Gastrocnemius medialis (tissue), 4 donors: ENCODE measurements at regions of chr1 and their contacts with region 1.

Region 1: DNA sequence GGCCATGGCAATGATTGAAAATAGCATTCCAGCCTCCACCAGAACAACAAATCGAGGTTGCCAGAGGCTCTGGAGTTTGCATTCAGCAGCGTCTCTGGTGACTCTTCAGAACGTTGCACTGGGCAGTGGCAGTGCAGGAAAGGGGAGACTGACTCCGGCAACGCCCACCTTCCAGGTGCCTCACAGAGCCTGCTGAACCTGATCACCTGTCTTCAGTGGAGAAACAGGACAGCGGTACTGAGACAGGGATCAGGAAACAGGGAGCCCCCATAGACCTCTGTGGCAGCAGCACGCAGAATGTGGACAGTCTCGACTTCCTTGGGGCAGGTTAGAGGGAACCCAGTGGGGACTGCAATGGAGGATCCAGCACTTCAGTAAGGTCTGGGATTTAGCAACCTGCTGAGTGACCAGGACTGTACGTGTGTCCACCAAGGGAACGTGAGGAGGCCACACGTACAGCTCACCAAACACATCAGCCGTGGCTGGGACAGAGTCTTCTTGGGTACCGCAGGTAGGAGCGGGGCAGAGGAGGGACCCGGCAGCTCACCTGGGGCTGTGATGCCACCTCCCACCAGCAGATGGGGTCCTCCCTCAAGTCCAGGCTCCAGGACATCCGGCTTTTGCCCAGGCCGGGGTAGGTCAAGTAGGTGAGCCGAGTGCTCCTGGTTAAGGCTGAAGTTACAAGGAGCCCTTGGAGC is 128.6 kb downstream of the PRDM2 start:
- DNase-seq: no peak
- ATAC-seq: peak; percentile 17 to 44
- H3K4me3 ChIP-seq: no peak overlapping the region
- H3K27ac ChIP-seq: no peak overlapping the region
- H3K4me1 ChIP-seq: no peaks in the 10 kb centered on the region
- H3K27me3 ChIP-seq: no peaks in the 10 kb centered on the region
- CTCF ChIP-seq: peak; percentile 14 to 61 (median 46)
- POLR2A ChIP-seq: no peak

Region 2: DNA sequence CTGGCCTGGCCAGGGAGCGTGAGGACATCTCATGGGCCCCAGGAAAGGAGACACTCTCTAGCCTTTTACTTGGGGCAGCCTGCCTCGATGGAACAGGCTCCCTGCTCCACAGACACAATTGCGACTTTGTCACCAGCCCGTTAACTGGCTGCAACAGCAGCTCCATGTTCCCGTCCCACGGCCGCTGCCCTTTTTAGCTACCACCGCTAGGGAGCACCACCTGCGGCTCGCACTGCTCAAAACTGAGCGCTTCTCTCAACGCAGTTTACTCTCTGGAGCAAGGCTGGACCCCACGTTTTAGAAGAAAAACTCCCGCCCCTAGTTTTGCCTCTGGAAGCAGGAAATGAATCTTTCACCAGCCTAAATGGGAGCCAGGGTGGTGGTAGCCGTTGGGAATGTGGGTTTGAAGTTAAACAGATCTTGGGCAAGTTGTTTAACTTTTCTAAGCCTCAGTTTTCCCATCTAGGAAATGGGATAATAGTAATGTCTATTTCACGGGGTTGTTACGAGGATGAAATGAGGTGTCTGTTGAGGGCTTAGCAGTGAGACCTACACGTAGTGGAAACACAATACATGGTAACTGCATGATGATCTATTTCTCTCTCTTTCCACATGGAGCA is 311.3 kb before region 1 on chr1:
- in situ Hi-C with region 1: no loop called
- intact Hi-C with region 1: no loop called
- DNase-seq: peak in 1 of 2 donors; percentile 49
- ATAC-seq: no peak
- H3K4me3 ChIP-seq: no peak overlapping the region
- H3K27ac ChIP-seq: peak overlapping the region in 1 of 4 donors; percentile 95
- H3K4me1 ChIP-seq: peaks cover 5% of the 10 kb centered on the region in 2 donors
- H3K27me3 ChIP-seq: no peaks in the 10 kb centered on the region
- CTCF ChIP-seq: peak in 4 of 5 experiments; percentile 31 to 55 (median 40)
- POLR2A ChIP-seq: no peak

Region 3: GRCh38 chr1:13662493-13662892 is 166.1 kb before region 1 on chr1:
- in situ Hi-C with region 1: loop called in 3 of 4 experiments (anchors 10 kb)
- intact Hi-C with region 1: loop called (anchors 5 kb)
- DNase-seq: peak; percentile 10 to 39
- ATAC-seq: peak in 1 of 2 donors; percentile 62
- H3K4me3 ChIP-seq: no peak overlapping the region
- H3K27ac ChIP-seq: peak overlapping the region in 2 of 4 donors; percentile 2 to 18
- H3K4me1 ChIP-seq: no peaks in the 10 kb centered on the region
- H3K27me3 ChIP-seq: no peaks in the 10 kb centered on the region
- CTCF ChIP-seq: no peak
- POLR2A ChIP-seq: no peak

Region 4: DNA sequence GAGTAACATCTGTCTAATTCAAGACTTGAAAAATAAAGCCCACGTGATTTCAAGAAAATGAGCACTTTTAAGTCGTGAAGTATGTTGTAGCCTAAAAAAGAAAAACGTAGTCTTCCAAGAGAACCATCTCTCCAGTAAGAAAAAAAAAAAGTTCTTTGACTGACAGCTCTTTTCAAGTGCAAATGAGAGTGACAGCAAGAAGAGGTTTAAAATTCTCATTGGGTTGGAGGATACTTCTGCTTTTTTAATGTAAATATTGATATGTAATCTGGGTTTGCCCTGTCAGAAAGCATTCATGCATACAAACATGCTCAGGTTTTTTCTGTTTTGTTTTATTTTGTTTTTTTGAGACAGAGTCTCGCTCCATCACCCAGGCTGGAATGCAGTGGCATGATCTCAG is 160.9 kb before region 1 on chr1:
- in situ Hi-C with region 1: loop called in 3 of 4 experiments (anchors 10 kb)
- intact Hi-C with region 1: loop called (anchors 5 kb)
- DNase-seq: no peak
- ATAC-seq: no peak
- H3K4me3 ChIP-seq: no peak overlapping the region
- H3K27ac ChIP-seq: no peak overlapping the region
- H3K4me1 ChIP-seq: no peaks in the 10 kb centered on the region
- H3K27me3 ChIP-seq: no peaks in the 10 kb centered on the region
- CTCF ChIP-seq: no peak
- POLR2A ChIP-seq: no peak

Region 5: DNA sequence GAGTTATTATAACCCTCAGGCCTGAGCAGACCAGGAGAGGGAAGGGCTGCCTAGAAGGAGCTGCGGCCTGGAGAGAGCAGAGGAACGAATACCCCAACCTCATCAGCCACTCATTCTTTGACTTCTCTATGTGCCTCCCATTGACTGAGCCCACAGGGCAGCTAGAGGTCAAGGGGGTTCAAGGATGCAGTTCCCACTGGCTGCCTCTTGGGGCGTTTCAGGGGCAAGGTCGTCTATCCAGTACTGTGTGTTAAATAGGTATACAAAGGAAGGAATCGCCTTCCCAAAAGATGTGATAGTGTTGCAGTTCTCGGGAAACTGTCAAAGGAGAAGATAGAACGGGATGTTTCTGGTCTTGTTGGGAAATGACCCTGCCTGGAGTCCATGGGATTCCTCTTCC is 122.0 kb after region 1 on chr1:
- in situ Hi-C with region 1: loop called in 2 of 4 experiments (anchors 10 to 25 kb)
- intact Hi-C with region 1: no loop called
- DNase-seq: no peak
- ATAC-seq: no peak
- H3K4me3 ChIP-seq: no peak overlapping the region
- H3K27ac ChIP-seq: no peak overlapping the region
- H3K4me1 ChIP-seq: no peaks in the 10 kb centered on the region
- H3K27me3 ChIP-seq: no peaks in the 10 kb centered on the region
- CTCF ChIP-seq: no peak
- POLR2A ChIP-seq: no peak

Region 6: GRCh38 chr1:13960375-13960987 is 131.9 kb after region 1 on chr1:
- in situ Hi-C with region 1: loop called in 2 of 4 experiments (anchors 10 to 25 kb)
- intact Hi-C with region 1: loop called (anchors 1 kb)
- DNase-seq: peak; percentile 32 to 45
- ATAC-seq: peak; percentile 63 to 81
- H3K4me3 ChIP-seq: no peak overlapping the region
- H3K27ac ChIP-seq: no peak overlapping the region
- H3K4me1 ChIP-seq: no peaks in the 10 kb centered on the region
- H3K27me3 ChIP-seq: peaks cover 0 to 2% (median 0%) of the 10 kb centered on the region in 3 donors
- CTCF ChIP-seq: peak; percentile 91 to 98 (median 92)
- POLR2A ChIP-seq: no peak